ENCODE measurements at regions of chr5 and their contacts with region 1.

Region 1: DNA sequence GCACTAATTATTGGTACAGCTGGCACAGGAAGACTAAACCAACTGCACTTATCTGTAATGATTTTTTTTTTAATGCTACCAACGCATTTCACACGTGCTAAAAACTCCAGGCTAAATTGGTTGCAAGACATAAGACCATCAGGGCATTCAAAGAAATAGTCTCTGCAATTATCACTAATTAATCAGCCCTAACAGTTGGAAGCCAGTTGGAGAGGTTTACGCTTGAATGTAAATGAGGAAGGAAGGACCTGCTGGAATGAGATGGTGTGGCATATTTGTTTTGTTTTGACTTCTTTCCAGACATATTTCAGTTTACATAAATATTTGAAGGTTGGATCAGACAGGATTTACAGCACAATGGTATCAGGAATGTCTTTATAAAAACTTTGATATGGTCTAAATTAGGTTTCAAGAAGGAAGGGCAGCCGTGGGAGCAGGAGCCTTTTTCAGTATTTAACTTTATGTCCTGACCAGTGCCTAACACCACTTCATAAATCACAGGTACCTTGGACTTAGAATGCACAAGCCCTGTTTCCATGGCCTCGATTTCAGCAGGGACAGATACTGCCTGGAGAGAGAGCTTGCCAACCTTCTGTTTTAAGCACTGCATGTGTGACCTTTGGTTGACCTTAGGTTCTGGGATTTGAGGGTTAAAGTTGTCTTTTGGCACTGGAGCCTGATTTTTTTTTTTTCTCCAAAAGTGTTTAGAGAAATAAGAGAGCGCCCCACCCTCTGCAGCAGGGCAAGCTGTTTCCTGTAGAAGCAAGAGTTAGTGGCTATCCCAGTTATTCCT is 199.8 kb upstream of the MAP3K1 start:
- DNase-seq: no peak
- H3K4me3 Mint-ChIP-seq: no peak overlapping the region
- H3K27ac Mint-ChIP-seq: peak overlapping the region; percentile 38
- H3K4me1 Mint-ChIP-seq: peaks cover 65% of the 10 kb centered on the region
- H3K27me3 Mint-ChIP-seq: no peaks in the 10 kb centered on the region

Region 2: DNA sequence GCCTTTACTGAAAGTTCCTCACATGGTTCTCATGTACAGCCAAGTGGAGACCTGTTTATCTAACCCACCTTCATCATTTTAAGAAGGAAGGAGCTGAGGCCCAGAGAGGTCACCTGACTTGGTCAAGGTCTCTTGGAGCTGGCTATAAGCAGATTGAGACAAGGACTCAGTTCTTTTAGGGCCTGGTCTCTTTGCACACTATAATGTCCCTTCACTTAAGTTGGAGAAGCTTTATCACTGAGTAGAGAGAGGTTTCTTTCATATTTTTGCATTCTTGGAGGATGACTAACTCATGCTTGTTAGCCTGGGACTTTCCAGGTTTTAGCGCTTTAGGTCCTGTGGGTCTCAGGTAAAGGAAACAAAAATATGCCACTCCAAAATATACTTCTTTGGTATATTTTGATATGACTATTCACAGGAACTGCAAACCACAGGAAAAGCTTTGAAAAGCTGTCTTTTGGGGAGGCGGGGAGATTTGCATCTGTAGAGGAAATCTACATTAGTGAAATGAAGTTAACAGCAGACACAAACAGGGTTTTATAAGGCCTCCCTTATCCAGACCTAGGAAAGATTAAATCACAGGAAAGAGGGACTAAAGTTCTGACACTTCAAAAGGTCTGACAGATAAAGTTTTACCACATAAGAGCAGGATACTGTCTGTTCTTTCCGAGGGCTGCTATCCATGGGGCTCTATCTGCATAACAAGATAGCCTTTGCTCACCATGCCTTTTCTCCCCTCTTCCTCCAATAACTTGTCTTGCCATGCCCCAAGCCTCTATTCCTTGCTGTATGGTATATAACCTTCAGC is 286.6 kb before region 1 on chr5:
- CTCF ChIA-PET with region 1: interaction called, 3 read pairs
- POLR2A ChIA-PET with region 1: interaction called, 20 read pairs
- DNase-seq: peak; percentile 52
- H3K4me3 Mint-ChIP-seq: peak overlapping the region; percentile 29
- H3K27ac Mint-ChIP-seq: peak overlapping the region; percentile 82
- H3K4me1 Mint-ChIP-seq: peaks cover 61% of the 10 kb centered on the region
- H3K27me3 Mint-ChIP-seq: no peaks in the 10 kb centered on the region

Region 3: GRCh38 chr5:56601641-56602071 is 13.9 kb before region 1 on chr5:
- CTCF ChIA-PET with region 1: interaction called, 4 read pairs
- POLR2A ChIA-PET with region 1: interaction called, 10 read pairs
- DNase-seq: no peak
- H3K4me3 Mint-ChIP-seq: no peak overlapping the region
- H3K27ac Mint-ChIP-seq: no peak overlapping the region
- H3K4me1 Mint-ChIP-seq: peaks cover 48% of the 10 kb centered on the region
- H3K27me3 Mint-ChIP-seq: peaks cover 13% of the 10 kb centered on the region

Region 4: GRCh38 chr5:56670118-56670483 is 54.5 kb after region 1 on chr5:
- CTCF ChIA-PET with region 1: no interaction called
- POLR2A ChIA-PET with region 1: interaction called, 11 read pairs
- DNase-seq: peak; percentile 68
- H3K4me3 Mint-ChIP-seq: no peak overlapping the region
- H3K27ac Mint-ChIP-seq: peak overlapping the region; percentile 87
- H3K4me1 Mint-ChIP-seq: peaks cover 52% of the 10 kb centered on the region
- H3K27me3 Mint-ChIP-seq: peaks cover 2% of the 10 kb centered on the region

Region 5: GRCh38 chr5:56686337-56687195 is 71.0 kb after region 1 on chr5:
- CTCF ChIA-PET with region 1: no interaction called
- POLR2A ChIA-PET with region 1: interaction called, 10 read pairs
- DNase-seq: no peak
- H3K4me3 Mint-ChIP-seq: no peak overlapping the region
- H3K27ac Mint-ChIP-seq: peak overlapping the region; percentile 47
- H3K4me1 Mint-ChIP-seq: peaks cover 46% of the 10 kb centered on the region
- H3K27me3 Mint-ChIP-seq: no peaks in the 10 kb centered on the region

Region 6: DNA sequence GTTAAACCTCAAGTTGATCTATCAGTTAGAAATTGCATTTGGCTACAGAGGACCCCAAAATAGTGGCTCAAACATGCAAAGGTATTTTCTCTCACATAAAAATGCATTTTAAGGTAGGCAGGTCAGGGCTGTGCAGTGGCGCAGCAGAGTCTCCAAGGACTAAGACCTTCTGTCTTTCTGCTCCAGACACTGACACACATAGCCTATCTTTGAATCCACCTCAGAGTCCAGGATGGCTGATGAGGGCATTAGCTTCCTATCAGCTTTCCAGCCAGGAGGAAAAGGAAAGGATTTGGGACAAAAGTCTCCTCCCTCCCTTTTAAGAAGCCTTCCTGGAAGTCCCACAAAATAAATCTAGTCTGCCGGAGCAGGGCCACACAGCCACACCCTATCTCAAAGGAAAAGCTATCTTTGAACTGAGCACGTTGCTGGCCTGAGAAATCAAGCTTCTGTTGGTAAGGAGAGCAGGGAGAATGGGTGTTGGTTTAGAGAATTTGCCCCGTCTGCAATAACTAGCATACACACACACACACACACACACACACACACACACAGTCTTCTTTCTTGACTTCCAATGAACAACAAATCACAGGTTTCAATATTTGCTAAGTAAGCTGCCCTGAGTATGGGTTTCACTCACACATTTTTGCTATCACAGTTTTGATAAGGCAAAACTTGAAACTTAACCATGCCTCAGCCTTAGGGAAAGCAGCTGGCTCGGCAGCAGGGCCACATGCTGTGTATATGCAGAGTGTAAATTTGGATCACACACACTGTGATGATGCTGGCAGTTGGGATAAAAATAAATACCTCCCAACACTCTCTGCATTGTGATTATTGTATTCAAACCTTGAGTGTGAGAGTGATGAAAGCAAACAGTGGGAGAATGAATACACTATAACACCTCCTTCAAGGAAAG is 83.2 kb after region 1 on chr5:
- CTCF ChIA-PET with region 1: interaction called, 3 read pairs
- POLR2A ChIA-PET with region 1: interaction called, 10 read pairs
- DNase-seq: no peak
- H3K4me3 Mint-ChIP-seq: no peak overlapping the region
- H3K27ac Mint-ChIP-seq: peak overlapping the region; percentile 73
- H3K4me1 Mint-ChIP-seq: peaks cover 62% of the 10 kb centered on the region
- H3K27me3 Mint-ChIP-seq: peaks cover 2% of the 10 kb centered on the region

Region 7: GRCh38 chr5:56814963-56815658 is 199.6 kb after region 1 on chr5 and contains the start of gene MAP3K1:
- CTCF ChIA-PET with region 1: no interaction called
- POLR2A ChIA-PET with region 1: interaction called, 13 read pairs
- DNase-seq: peak; percentile 83
- H3K4me3 Mint-ChIP-seq: peak within 1 kb of the TSS; percentile 96
- H3K27ac Mint-ChIP-seq: peak within 1 kb of the TSS; percentile 94
- H3K4me1 Mint-ChIP-seq: peaks cover 43% of the 10 kb centered on the region
- H3K27me3 Mint-ChIP-seq: peaks cover 3% of the 10 kb centered on the region
- total RNA-seq, gene MAP3K1: 47.5 to 49.5 TPM

Region 8: DNA sequence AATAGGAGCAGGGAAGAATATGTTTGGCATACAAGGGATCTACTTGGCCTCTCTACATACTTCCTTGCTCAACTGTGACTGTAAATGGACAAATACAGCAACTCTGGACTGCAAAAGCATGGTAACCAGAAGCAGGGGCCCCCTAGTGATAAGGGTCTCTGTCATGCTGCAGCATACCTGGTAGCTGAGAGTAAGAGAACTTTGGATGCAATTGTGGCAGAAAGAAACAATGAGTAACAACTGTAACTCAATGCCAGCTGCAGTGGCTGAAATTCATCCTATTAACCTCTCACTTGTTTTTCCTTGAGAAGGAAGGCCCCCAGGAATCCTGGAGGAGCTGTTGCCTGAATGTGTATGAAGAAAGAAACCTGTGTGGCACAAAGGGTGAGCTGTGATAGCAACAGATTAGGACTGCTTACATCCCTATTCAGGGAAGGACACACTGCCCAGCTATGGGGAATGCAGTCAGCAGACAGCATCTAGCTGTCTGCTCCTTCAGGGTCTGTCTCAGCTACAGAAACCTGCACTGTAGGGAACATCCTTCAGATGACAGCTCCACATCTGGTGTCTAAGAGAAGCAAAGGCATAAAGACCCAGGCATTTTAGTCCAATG is 1335.2 kb after region 1 on chr5:
- CTCF ChIA-PET with region 1: no interaction called
- POLR2A ChIA-PET with region 1: no interaction called
- DNase-seq: no peak
- H3K4me3 Mint-ChIP-seq: no peak overlapping the region
- H3K27ac Mint-ChIP-seq: no peak overlapping the region
- H3K4me1 Mint-ChIP-seq: no peaks in the 10 kb centered on the region
- H3K27me3 Mint-ChIP-seq: peaks cover 2% of the 10 kb centered on the region

Measured in activated CD4-positive, alpha-beta memory T cell treated with anti-CD3 and anti-CD28 coated beads, Interleukin-2, amount 10 ng/mL, durations not matched to agents 7 days and 5 days (primary cell).